ENCODE measurements at regions of chr12 and their contacts with region 1.

Region 1: GRCh38 chr12:108664338-108665258 is 30.9 kb upstream of the SELPLG start:
- DNase-seq: peak; percentile 63 to 86
- H3K4me3 ChIP-seq: no peak overlapping the region
- H3K27ac ChIP-seq: no peak overlapping the region
- H3K4me1 ChIP-seq: peaks cover 0 to 3% (median 0%) of the 10 kb centered on the region in 4 experiments; a peak in 3 of 7 replicates
- H3K27me3 ChIP-seq: no peaks in the 10 kb centered on the region
- CTCF ChIP-seq: peak; percentile 77 to 98 (median 91)
- EP300 ChIP-seq: no peak
- POLR2A ChIP-seq: no peak
- RAD21 ChIP-seq: peak; percentile 99 to 100

Region 2: DNA sequence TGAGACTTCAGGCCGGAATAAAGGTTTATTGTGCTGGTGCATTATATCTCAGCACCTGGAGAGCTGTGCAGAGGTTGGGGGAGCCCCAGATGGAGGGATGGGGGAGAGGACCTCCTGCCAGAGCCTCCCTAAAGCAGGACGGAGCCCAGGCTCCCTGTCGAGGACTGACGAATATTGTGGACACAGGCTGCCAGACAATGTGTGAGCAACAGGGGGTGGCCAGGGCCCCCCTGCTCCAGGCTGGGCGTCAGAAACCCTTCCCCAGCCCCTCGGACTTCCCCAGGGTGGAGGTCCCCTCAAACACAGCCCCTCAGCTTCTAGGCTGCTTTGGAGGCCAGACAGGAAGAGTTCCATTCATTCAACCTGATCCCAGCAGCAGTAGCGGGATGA is 74.8 kb before region 1 on chr12:
- CTCF ChIA-PET with region 1: no interaction called
- POLR2A ChIA-PET with region 1: no interaction called
- DNase-seq: no peak
- H3K4me3 ChIP-seq: no peak overlapping the region
- H3K27ac ChIP-seq: no peak overlapping the region
- H3K4me1 ChIP-seq: peaks cover 0 to 17% (median 11%) of the 10 kb centered on the region in 4 experiments; a peak in 6 of 7 replicates
- H3K27me3 ChIP-seq: no peaks in the 10 kb centered on the region
- CTCF ChIP-seq: no peak
- EP300 ChIP-seq: no peak
- POLR2A ChIP-seq: no peak
- RAD21 ChIP-seq: no peak

Region 3: GRCh38 chr12:108685469-108686260 is 21.1 kb after region 1 on chr12:
- CTCF ChIA-PET with region 1: interaction called, 41 read pairs
- POLR2A ChIA-PET with region 1: interaction called, 6 read pairs
- DNase-seq: no peak
- H3K4me3 ChIP-seq: no peak overlapping the region
- H3K27ac ChIP-seq: no peak overlapping the region
- H3K4me1 ChIP-seq: peaks cover 0 to 9% (median 1%) of the 10 kb centered on the region in 4 experiments; a peak in 3 of 7 replicates
- H3K27me3 ChIP-seq: no peaks in the 10 kb centered on the region
- CTCF ChIP-seq: no peak
- EP300 ChIP-seq: no peak
- POLR2A ChIP-seq: no peak
- RAD21 ChIP-seq: no peak

Region 4: DNA sequence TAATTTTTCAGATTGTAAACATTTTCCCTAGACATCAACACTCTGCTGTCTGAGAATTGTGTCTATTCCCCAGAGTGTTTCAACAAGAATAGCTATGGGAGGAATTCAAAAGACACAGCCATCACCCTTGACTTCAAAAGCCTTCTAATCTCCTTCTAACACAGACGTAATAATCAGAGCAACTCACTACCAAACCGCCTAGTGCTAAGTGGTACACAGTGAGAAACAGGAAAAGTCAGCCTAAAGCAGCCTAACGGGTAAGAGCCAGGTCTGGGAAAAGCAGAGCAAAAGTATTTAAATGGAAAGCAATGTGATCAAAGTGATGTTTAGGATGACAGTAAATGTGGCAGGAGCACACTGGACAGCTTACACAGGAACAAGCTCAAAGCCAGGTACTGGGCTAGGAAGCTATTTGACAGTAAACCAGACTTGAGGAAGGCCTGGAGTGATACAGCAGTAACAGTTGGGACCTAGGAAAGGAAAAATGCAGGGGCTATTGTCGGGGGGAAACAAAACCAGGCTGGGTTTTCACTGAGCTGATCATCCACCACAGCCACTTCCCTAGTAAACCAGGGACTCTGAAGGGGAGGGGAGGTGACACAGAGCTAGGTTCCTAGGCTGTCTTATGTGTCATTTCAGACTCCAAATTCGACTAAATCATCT is 37.3 kb after region 1 on chr12:
- CTCF ChIA-PET with region 1: interaction called, 15 read pairs
- POLR2A ChIA-PET with region 1: no interaction called
- DNase-seq: no peak
- H3K4me3 ChIP-seq: no peak overlapping the region
- H3K27ac ChIP-seq: peak overlapping the region; percentile 22; the same call in 1 of the 2 replicates
- H3K4me1 ChIP-seq: peaks cover 6 to 16% (median 10%) of the 10 kb centered on the region in 4 experiments; a peak in 6 of 7 replicates
- H3K27me3 ChIP-seq: no peaks in the 10 kb centered on the region
- CTCF ChIP-seq: no peak
- EP300 ChIP-seq: no peak
- POLR2A ChIP-seq: no peak
- RAD21 ChIP-seq: no peak

Region 5: DNA sequence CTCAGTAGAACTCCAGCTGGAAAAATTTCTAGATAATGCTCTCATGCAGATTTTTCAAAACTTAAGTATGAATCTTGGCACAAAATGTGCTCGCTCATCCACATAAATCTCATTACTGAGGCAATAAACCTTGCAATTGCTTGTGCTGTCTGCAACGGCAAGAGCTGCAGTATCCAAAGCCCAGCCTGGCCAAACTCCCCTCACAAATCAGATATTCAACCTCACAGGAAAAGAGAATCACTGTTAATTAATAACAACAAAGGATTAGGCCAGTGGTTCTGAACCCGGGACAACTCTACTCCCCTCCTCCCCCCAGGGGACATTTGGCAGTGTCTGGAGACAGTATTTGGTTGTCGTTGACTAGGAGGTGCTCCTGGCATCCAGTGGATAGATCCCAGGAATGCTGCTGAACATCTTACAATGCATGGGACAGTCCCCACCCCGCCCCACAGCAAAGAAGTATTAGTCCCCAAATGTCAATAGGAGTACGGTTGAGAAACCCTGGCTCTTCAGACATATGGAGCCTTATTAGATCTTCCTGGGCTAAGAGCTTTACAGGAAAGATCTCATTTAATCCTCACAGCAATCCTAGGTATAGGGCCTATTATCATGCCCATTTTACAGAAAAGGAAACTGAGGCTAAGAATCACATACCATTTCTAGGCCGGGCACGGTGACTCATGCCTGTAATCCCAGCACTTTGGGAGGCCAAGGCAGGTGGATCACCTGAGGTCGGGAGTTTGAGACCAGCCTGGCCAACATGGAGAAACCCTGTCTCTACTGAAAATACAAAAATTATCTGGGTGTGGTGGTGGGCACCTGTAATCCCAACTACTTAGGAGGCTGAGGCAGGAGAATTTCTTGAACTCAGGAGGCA is 86.2 kb after region 1 on chr12:
- CTCF ChIA-PET with region 1: interaction called, 14 read pairs
- POLR2A ChIA-PET with region 1: interaction called, 3 read pairs
- DNase-seq: no peak
- H3K4me3 ChIP-seq: no peak overlapping the region
- H3K27ac ChIP-seq: no peak overlapping the region
- H3K4me1 ChIP-seq: no peaks in the 10 kb centered on the region
- H3K27me3 ChIP-seq: no peaks in the 10 kb centered on the region
- CTCF ChIP-seq: no peak
- EP300 ChIP-seq: no peak
- POLR2A ChIP-seq: no peak
- RAD21 ChIP-seq: no peak

Region 6: DNA sequence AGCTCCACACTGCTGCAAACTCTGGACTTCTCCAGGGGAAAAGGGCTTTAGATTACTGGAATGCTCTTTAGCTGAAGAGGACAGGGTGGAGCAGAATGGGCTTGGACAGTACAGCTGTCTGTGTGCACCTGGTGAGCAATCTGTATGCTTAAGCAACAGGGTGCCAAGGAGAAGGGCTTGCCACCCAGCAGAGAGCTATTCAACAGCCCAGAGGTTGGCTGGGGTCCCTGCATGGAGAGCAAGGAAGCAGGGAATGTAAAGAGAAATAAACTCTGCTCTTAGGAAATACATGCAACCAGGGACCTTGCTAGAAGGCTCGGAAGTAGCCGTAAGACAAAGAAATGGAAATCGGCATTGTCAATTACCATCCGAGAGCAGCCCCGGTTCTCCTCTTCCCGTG is 119.7 kb after region 1 on chr12:
- CTCF ChIA-PET with region 1: interaction called, 29 read pairs
- POLR2A ChIA-PET with region 1: no interaction called
- DNase-seq: no peak
- H3K4me3 ChIP-seq: no peak overlapping the region
- H3K27ac ChIP-seq: no peak overlapping the region
- H3K4me1 ChIP-seq: peaks cover 5 to 16% (median 8%) of the 10 kb centered on the region in 4 experiments; a peak in 6 of 7 replicates
- H3K27me3 ChIP-seq: no peaks in the 10 kb centered on the region
- CTCF ChIP-seq: no peak
- EP300 ChIP-seq: no peak
- POLR2A ChIP-seq: no peak
- RAD21 ChIP-seq: no peak

Region 7: GRCh38 chr12:108803428-108804105 is 139.0 kb after region 1 on chr12:
- CTCF ChIA-PET with region 1: interaction called, 188 read pairs
- POLR2A ChIA-PET with region 1: interaction called, 6 read pairs
- DNase-seq: peak in 1 of 2 experiments; percentile 76
- H3K4me3 ChIP-seq: peak overlapping the region in 1 of 4 experiments; percentile 43; a peak in 1 of 8 replicates
- H3K27ac ChIP-seq: no peak overlapping the region
- H3K4me1 ChIP-seq: peaks cover 2 to 13% (median 8%) of the 10 kb centered on the region in 4 experiments; a peak in 5 of 7 replicates
- H3K27me3 ChIP-seq: no peaks in the 10 kb centered on the region
- CTCF ChIP-seq: peak; percentile 75 to 95 (median 80)
- EP300 ChIP-seq: no peak
- POLR2A ChIP-seq: no peak
- RAD21 ChIP-seq: peak; percentile 96

Measured in H1 (cell line).